ENCODE measurements at regions of chr14 and their contacts with region 1.

Region 1: GRCh38 chr14:77067632-77068514 is 30.2 kb upstream of the CIPC start:
- DNase-seq: peak; percentile 18 to 68 (median 55)
- ATAC-seq: peak; percentile 59
- H3K4me3 ChIP-seq: no peak overlapping the region
- H3K4me3 Mint-ChIP-seq: no peak overlapping the region
- H3K27ac ChIP-seq: no peak overlapping the region
- H3K27ac Mint-ChIP-seq: no peak overlapping the region
- H3K4me1 ChIP-seq: no peaks in the 10 kb centered on the region
- H3K4me1 Mint-ChIP-seq: peaks cover 2% of the 10 kb centered on the region
- H3K27me3 ChIP-seq: no peaks in the 10 kb centered on the region
- H3K27me3 Mint-ChIP-seq: peaks cover 5% of the 10 kb centered on the region
- CTCF ChIP-seq: peak; percentile 65

Region 2: DNA sequence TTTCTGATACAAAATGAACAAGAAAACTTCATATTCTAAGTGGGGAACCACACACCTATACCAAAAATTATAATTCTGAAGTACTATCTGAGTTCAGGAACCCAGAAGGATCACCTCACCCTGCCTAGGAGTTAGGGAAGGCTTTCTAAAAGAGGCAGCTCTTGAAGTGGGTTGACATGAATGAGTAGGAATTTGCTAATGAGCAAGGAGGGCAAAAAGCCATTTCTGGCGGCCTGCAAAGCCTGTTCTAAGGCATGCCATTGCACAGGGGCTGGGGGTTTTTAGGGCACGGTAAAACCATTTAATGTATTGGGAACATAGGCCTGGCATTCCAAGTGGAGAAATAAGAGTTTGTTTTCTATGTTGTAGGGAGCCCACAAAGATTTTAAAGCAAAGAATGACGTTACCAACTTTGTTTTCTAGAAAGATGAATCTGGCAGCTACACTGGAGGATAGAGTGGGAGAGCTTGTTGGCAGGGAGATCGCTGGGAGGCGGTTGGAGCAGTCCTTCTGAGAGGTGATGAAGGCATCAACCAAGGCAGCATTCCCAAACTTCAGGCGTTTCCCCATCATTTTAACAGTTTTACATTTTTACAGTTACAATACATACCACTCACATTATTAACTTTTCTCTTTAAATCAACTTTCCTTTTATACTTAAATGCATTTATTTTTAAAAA is 1068.2 kb before region 1 on chr14:
- CTCF ChIA-PET with region 1: no interaction called
- POLR2A ChIA-PET with region 1: no interaction called
- intact Hi-C with region 1: no loop called
- DNase-seq: no peak
- ATAC-seq: no peak
- H3K4me3 ChIP-seq: no peak overlapping the region
- H3K4me3 Mint-ChIP-seq: no peak overlapping the region
- H3K27ac ChIP-seq: no peak overlapping the region
- H3K27ac Mint-ChIP-seq: no peak overlapping the region
- H3K4me1 ChIP-seq: no peaks in the 10 kb centered on the region
- H3K4me1 Mint-ChIP-seq: no peaks in the 10 kb centered on the region
- H3K27me3 ChIP-seq: no peaks in the 10 kb centered on the region
- H3K27me3 Mint-ChIP-seq: no peaks in the 10 kb centered on the region
- CTCF ChIP-seq: no peak

Region 3: GRCh38 chr14:76710056-76711010 is 357.5 kb before region 1 on chr14:
- CTCF ChIA-PET with region 1: interaction called, 31 read pairs
- POLR2A ChIA-PET with region 1: no interaction called
- intact Hi-C with region 1: loop called in 1 of 2 experiments (anchors 1 kb)
- DNase-seq: peak in 4 of 9 experiments; percentile 23 to 62 (median 44)
- ATAC-seq: no peak
- H3K4me3 ChIP-seq: no peak overlapping the region
- H3K4me3 Mint-ChIP-seq: no peak overlapping the region
- H3K27ac ChIP-seq: no peak overlapping the region
- H3K27ac Mint-ChIP-seq: no peak overlapping the region
- H3K4me1 ChIP-seq: no peaks in the 10 kb centered on the region
- H3K4me1 Mint-ChIP-seq: no peaks in the 10 kb centered on the region
- H3K27me3 ChIP-seq: no peaks in the 10 kb centered on the region
- H3K27me3 Mint-ChIP-seq: peaks cover 13% of the 10 kb centered on the region
- CTCF ChIP-seq: peak; percentile 63

Region 4: DNA sequence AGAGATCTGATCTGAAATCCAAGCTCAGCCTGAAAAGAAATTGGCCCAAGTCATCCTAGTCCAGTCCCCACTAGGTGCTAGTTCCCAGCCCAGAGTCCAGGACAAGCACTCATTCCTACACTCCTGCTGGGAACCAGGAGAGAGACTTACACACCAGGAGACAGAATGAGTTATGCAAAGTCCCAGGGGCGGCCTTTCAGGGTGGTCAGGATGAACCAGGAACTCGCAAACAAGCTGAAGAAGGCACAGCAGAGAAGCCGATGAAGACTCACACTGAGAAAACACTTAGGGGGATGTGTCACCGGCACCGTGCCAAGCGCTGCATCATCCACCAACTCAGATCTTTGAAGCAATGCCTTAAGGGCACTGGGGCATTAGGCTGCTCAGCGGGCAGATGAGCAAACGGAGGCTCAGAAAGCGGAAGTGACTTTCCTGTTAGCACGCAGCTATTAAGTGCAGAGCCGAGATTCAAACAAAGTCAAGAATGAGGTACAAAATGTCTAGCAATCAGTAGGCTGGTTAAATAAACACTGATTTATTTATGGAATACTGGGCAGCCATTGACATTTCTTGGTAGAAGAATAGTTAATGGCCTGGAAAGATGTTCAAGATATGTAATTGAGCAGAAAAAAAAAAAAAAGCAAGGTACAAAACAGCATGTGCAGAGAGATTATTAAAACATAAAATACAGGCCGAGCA is 163.0 kb before region 1 on chr14:
- CTCF ChIA-PET with region 1: interaction called, 10 read pairs
- POLR2A ChIA-PET with region 1: no interaction called
- intact Hi-C with region 1: no loop called
- DNase-seq: peak; percentile 38 to 85 (median 77)
- ATAC-seq: peak; percentile 84
- H3K4me3 ChIP-seq: peak overlapping the region in 1 of 2 experiments; percentile 3
- H3K4me3 Mint-ChIP-seq: peak overlapping the region; percentile 61
- H3K27ac ChIP-seq: no peak overlapping the region
- H3K27ac Mint-ChIP-seq: peak overlapping the region; percentile 68
- H3K4me1 ChIP-seq: peaks cover 28% of the 10 kb centered on the region
- H3K4me1 Mint-ChIP-seq: peaks cover 23% of the 10 kb centered on the region
- H3K27me3 ChIP-seq: no peaks in the 10 kb centered on the region
- H3K27me3 Mint-ChIP-seq: no peaks in the 10 kb centered on the region
- CTCF ChIP-seq: no peak

Region 5: DNA sequence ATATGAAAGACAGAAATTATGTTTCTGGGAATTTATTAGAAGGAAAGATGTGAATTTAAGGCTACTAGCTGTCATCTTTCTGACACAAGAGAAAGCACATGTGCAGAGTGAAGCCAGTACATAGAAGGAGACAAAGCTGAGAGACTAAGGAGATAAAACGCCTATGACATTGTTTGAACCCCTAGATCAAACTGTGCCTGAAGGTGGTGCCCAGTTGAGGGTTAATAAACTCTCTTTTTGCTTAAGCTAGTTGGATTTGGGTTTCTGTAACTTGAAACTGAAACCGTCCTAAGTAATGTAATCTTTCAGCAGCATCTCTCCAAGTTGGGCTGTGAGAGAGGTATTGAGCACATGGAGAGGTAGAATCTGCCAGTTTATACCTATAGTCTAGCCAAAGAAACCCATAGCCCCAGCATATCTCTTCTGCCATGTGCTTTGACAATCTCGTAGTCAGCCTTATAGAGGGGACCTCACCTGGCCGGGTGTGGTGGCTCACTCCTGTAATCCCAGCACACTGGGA is 157.4 kb before region 1 on chr14:
- CTCF ChIA-PET with region 1: interaction called, 66 read pairs
- POLR2A ChIA-PET with region 1: no interaction called
- intact Hi-C with region 1: loop called (anchors 1 kb)
- DNase-seq: no peak
- ATAC-seq: no peak
- H3K4me3 ChIP-seq: no peak overlapping the region
- H3K4me3 Mint-ChIP-seq: no peak overlapping the region
- H3K27ac ChIP-seq: no peak overlapping the region
- H3K27ac Mint-ChIP-seq: no peak overlapping the region
- H3K4me1 ChIP-seq: peaks cover 25% of the 10 kb centered on the region
- H3K4me1 Mint-ChIP-seq: peaks cover 25% of the 10 kb centered on the region
- H3K27me3 ChIP-seq: no peaks in the 10 kb centered on the region
- H3K27me3 Mint-ChIP-seq: no peaks in the 10 kb centered on the region
- CTCF ChIP-seq: no peak

Region 6: GRCh38 chr14:76918751-76919543 is 148.9 kb before region 1 on chr14:
- CTCF ChIA-PET with region 1: interaction called, 66 read pairs
- POLR2A ChIA-PET with region 1: no interaction called
- intact Hi-C with region 1: no loop called
- DNase-seq: no peak
- ATAC-seq: no peak
- H3K4me3 ChIP-seq: no peak overlapping the region
- H3K4me3 Mint-ChIP-seq: no peak overlapping the region
- H3K27ac ChIP-seq: no peak overlapping the region
- H3K27ac Mint-ChIP-seq: no peak overlapping the region
- H3K4me1 ChIP-seq: peaks cover 17% of the 10 kb centered on the region
- H3K4me1 Mint-ChIP-seq: peaks cover 29% of the 10 kb centered on the region
- H3K27me3 ChIP-seq: no peaks in the 10 kb centered on the region
- H3K27me3 Mint-ChIP-seq: no peaks in the 10 kb centered on the region
- CTCF ChIP-seq: no peak

Region 7: GRCh38 chr14:76947078-76947837 is 120.6 kb before region 1 on chr14:
- CTCF ChIA-PET with region 1: interaction called, 10 read pairs
- POLR2A ChIA-PET with region 1: no interaction called
- intact Hi-C with region 1: no loop called
- DNase-seq: peak; percentile 52 to 90 (median 80)
- ATAC-seq: peak; percentile 96
- H3K4me3 ChIP-seq: no peak overlapping the region
- H3K4me3 Mint-ChIP-seq: no peak overlapping the region
- H3K27ac ChIP-seq: peak overlapping the region in 1 of 2 experiments; percentile 19
- H3K27ac Mint-ChIP-seq: peak overlapping the region; percentile 60
- H3K4me1 ChIP-seq: peaks cover 13% of the 10 kb centered on the region
- H3K4me1 Mint-ChIP-seq: peaks cover 19% of the 10 kb centered on the region
- H3K27me3 ChIP-seq: no peaks in the 10 kb centered on the region
- H3K27me3 Mint-ChIP-seq: no peaks in the 10 kb centered on the region
- CTCF ChIP-seq: peak; percentile 46

Region 8: GRCh38 chr14:77114609-77115008 is 46.7 kb after region 1 on chr14:
- CTCF ChIA-PET with region 1: interaction called, 5 read pairs
- POLR2A ChIA-PET with region 1: no interaction called
- intact Hi-C with region 1: loop called in 1 of 2 experiments (anchors 1 kb)
- DNase-seq: no peak
- ATAC-seq: no peak
- H3K4me3 ChIP-seq: no peak overlapping the region
- H3K4me3 Mint-ChIP-seq: no peak overlapping the region
- H3K27ac ChIP-seq: no peak overlapping the region
- H3K27ac Mint-ChIP-seq: no peak overlapping the region
- H3K4me1 ChIP-seq: no peaks in the 10 kb centered on the region
- H3K4me1 Mint-ChIP-seq: peaks cover under 1% of the 10 kb centered on the region
- H3K27me3 ChIP-seq: no peaks in the 10 kb centered on the region
- H3K27me3 Mint-ChIP-seq: no peaks in the 10 kb centered on the region
- CTCF ChIP-seq: no peak

Measured in CD8-positive, alpha-beta T cell (primary cell).